HepG2 (cell line): ENCODE measurements at regions of chr9 and their contacts with region 1.

Region 1: GRCh38 chr9:97411789-97412625 is at the start of gene TDRD7:
- DNase-seq: peak; percentile 65
- ATAC-seq: peak; percentile 86
- H3K4me3 ChIP-seq: peak within 1 kb of the TSS; percentile 80 to 86 (median 83)
- H3K27ac ChIP-seq: peak within 1 kb of the TSS; percentile 73
- H3K4me1 ChIP-seq: peaks cover 59% of the 10 kb centered on the region
- H3K27me3 ChIP-seq: no peaks in the 10 kb centered on the region
- CTCF ChIP-seq: peak; percentile 94
- EP300 ChIP-seq: peak in 1 of 2 experiments; percentile 33; a peak in 1 of 4 replicates
- POLR2A ChIP-seq: peak in 1 of 2 experiments; percentile 48; a peak in 1 of 4 replicates
- RAD21 ChIP-seq: peak; percentile 95
- total RNA-seq, gene TDRD7: 15.5 and 21.7 TPM in 2 replicates

Region 2: GRCh38 chr9:97315550-97315949 is 96.5 kb before region 1 on chr9:
- CTCF ChIA-PET with region 1: no interaction called
- POLR2A ChIA-PET with region 1: no interaction called
- in situ Hi-C with region 1: no loop called
- intact Hi-C with region 1: no loop called
- DNase-seq: no peak
- ATAC-seq: no peak
- H3K4me3 ChIP-seq: no peak overlapping the region
- H3K27ac ChIP-seq: no peak overlapping the region
- H3K4me1 ChIP-seq: no peaks in the 10 kb centered on the region
- H3K27me3 ChIP-seq: peaks cover 0 to 3% of the 10 kb centered on the region in 2 experiments; a peak in 1 of 5 replicates
- CTCF ChIP-seq: no peak
- EP300 ChIP-seq: no peak
- POLR2A ChIP-seq: no peak
- RAD21 ChIP-seq: no peak

Region 3: DNA sequence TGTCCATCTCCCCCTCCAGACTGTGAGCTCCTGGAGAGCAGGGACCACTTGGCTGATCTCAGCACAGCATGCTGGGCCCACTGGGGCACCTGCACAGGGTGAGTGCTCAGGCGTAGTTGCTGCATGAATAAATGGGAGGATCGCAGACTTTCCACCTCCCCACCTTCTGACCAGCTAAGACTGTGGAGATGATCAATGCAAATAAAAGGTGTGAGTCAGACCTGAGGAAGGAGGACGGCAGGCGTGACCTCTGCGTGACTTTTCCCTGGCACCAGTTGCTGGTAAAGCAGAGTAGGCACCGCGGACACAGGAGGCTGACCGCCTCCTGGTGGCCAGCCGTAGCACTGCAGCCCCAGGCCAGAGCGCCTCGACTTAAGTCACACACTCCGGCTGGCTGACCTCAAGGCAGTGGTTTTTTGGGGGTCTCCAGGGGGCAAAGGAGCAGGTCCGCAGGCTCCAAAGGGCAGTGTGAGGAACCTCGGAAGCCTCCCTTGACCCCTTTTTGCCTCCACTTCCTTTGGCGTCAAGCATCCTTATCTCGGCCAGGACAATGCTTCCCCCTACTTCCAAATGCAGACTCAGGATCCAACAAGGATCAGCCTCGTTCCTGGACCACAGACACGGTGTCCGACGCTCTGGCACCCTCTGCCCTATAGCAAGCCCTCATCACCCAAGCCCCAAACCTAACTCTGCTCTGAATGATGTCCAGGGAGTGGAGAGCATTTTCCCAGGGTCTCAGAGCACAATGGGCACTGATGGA is 12.8 kb before region 1 on chr9:
- CTCF ChIA-PET with region 1: interaction called, 13 read pairs
- POLR2A ChIA-PET with region 1: interaction called, 5 read pairs
- in situ Hi-C with region 1: no loop called
- intact Hi-C with region 1: no loop called
- DNase-seq: peak; percentile 54
- ATAC-seq: peak; percentile 73
- H3K4me3 ChIP-seq: peak overlapping the region in 1 of 3 experiments; percentile 12; a peak in 1 of 6 replicates
- H3K27ac ChIP-seq: no peak overlapping the region
- H3K4me1 ChIP-seq: peaks cover 92% of the 10 kb centered on the region
- H3K27me3 ChIP-seq: no peaks in the 10 kb centered on the region
- CTCF ChIP-seq: peak; percentile 94
- EP300 ChIP-seq: no peak
- POLR2A ChIP-seq: no peak
- RAD21 ChIP-seq: peak; percentile 93

Region 4: GRCh38 chr9:97615439-97616072 is 203.5 kb after region 1 on chr9:
- CTCF ChIA-PET with region 1: interaction called, 3 read pairs
- POLR2A ChIA-PET with region 1: no interaction called
- in situ Hi-C with region 1: no loop called
- intact Hi-C with region 1: loop called (anchors 5 kb)
- DNase-seq: peak; percentile 39
- ATAC-seq: peak; percentile 49; the same call in 1 of the 3 replicates
- H3K4me3 ChIP-seq: no peak overlapping the region
- H3K27ac ChIP-seq: no peak overlapping the region
- H3K4me1 ChIP-seq: no peaks in the 10 kb centered on the region
- H3K27me3 ChIP-seq: no peaks in the 10 kb centered on the region
- CTCF ChIP-seq: peak; percentile 82
- EP300 ChIP-seq: no peak
- POLR2A ChIP-seq: no peak
- RAD21 ChIP-seq: peak; percentile 52; the same call in 1 of the 2 replicates